ENCODE measurements at regions of chr9 and their contacts with region 1.

Region 1: DNA sequence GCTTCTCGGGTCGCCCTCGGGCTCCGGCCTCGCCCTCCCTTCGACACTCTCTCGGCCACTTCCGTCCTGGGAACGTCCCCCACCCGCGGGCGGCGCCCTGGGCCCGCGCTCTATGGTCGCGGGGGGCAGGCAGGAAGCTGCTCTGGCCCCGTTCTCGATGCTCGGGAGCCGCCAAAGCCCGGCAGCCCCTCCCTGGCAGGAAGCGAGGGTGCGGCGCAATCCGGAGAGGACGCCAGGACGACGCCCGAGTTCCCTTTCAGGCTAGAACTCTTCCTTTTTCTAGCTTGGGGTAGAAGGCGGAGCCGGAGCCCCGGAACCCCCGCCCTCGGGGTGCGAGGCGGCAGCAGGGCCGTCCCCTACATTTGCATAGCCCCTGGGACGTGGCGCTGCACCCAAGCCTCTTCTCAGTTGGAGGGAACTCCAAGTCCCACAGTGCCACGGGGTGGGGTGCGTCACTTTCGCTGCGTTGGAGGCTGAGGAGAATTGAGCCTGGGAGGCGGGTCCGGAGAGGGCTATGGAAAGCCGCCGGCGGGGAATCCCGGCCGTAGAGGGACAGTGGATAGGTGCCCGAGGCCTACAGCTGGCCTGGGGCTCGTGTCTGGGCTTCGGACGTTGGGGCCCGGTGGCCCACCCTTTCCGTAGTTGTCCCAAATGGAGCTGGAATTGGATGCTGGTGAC is at the starts of genes CREB3 and TLN1:
- DNase-seq: peak; percentile 99
- H3K4me3 ChIP-seq: peak within 1 kb of the TSS; percentile 72 to 88 (median 80)
- H3K27ac ChIP-seq: peak within 1 kb of the TSS; percentile 74
- H3K4me1 ChIP-seq: peaks cover 52% of the 10 kb centered on the region
- H3K27me3 ChIP-seq: no peaks in the 10 kb centered on the region
- CTCF ChIP-seq: no peak
- total RNA-seq, gene CREB3: 45.4 to 60.8 TPM
- total RNA-seq, gene TLN1: 202 to 213 TPM

Region 2: DNA sequence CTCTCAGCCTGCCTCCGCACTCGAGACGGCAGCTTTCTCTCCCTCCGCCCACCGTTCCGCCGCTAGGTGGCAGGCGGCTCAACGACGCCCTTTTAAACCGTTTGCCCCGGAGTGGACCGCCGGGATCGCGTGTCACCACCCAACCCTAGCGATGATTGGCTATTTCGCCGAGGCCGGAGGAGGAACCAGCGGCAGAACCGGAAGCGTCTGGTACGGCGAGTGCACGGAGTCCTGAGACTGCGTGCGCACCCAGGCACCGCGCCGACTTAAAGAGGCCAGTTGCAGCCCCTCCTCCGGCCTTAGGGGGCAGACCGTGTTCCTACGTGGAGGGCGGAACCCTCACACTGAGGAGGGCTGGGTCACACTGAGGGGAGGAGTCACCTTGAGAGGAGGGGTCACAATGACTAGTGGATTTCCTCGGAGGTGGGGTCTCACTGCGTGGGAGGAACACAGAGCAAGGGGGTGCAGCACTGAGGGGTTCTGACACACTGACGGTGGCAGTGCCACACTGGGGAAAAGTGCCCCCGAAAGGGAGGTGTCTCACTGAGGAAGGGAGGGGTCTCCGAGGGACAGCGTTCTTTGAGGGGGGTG is 128.2 kb before region 1 on chr9:
- CTCF ChIA-PET with region 1: no interaction called
- dilution Hi-C with region 1: no loop called
- in situ Hi-C with region 1: no loop called
- intact Hi-C with region 1: loop called (anchors 1 kb)
- DNase-seq: peak; percentile 99
- H3K4me3 ChIP-seq: peak overlapping the region; percentile 60 to 67 (median 64)
- H3K27ac ChIP-seq: peak overlapping the region; percentile 68
- H3K4me1 ChIP-seq: peaks cover 28% of the 10 kb centered on the region
- H3K27me3 ChIP-seq: no peaks in the 10 kb centered on the region
- CTCF ChIP-seq: peak; percentile 82 to 83

Region 3: GRCh38 chr9:35657546-35658136 is 74.6 kb before region 1 on chr9 and contains the start of gene RMRP:
- CTCF ChIA-PET with region 1: no interaction called
- dilution Hi-C with region 1: no loop called
- in situ Hi-C with region 1: loop called in 1 of 2 experiments (anchors 5 kb)
- intact Hi-C with region 1: loop called (anchors 1 kb)
- DNase-seq: peak; percentile 99
- H3K4me3 ChIP-seq: peak within 1 kb of the TSS; percentile 88 to 95 (median 94)
- H3K27ac ChIP-seq: peak within 1 kb of the TSS; percentile 100
- H3K4me1 ChIP-seq: peaks cover 26% of the 10 kb centered on the region
- H3K27me3 ChIP-seq: no peaks in the 10 kb centered on the region
- CTCF ChIP-seq: peak; percentile 2 to 25
- total RNA-seq, gene RMRP: 16,267 to 114,057 TPM

Region 4: GRCh38 chr9:35696525-35697215 is 35.6 kb before region 1 on chr9:
- CTCF ChIA-PET with region 1: interaction called, 13 read pairs
- dilution Hi-C with region 1: no loop called
- in situ Hi-C with region 1: no loop called
- intact Hi-C with region 1: loop called (anchors 2 kb)
- DNase-seq: peak; percentile 42
- H3K4me3 ChIP-seq: no peak overlapping the region
- H3K27ac ChIP-seq: no peak overlapping the region
- H3K4me1 ChIP-seq: no peaks in the 10 kb centered on the region
- H3K27me3 ChIP-seq: no peaks in the 10 kb centered on the region
- CTCF ChIP-seq: peak; percentile 89 to 94

Region 5: GRCh38 chr9:35748858-35749514 is 16.7 kb after region 1 on chr9 and contains the starts of genes GBA2 and RGP1:
- CTCF ChIA-PET with region 1: interaction called, 4 read pairs
- dilution Hi-C with region 1: no loop called
- in situ Hi-C with region 1: no loop called
- intact Hi-C with region 1: loop called (anchors 1 kb)
- DNase-seq: peak; percentile 79
- H3K4me3 ChIP-seq: peak within 1 kb of the TSS; percentile 66 to 83 (median 71)
- H3K27ac ChIP-seq: peak within 1 kb of the TSS; percentile 50
- H3K4me1 ChIP-seq: peaks cover 24% of the 10 kb centered on the region
- H3K27me3 ChIP-seq: no peaks in the 10 kb centered on the region
- CTCF ChIP-seq: no peak
- total RNA-seq, gene GBA2: 41.0 to 49.8 TPM
- total RNA-seq, gene RGP1: 20.5 to 42.3 TPM

Region 6: GRCh38 chr9:35771534-35771933 is 39.3 kb after region 1 on chr9:
- CTCF ChIA-PET with region 1: no interaction called
- dilution Hi-C with region 1: no loop called
- in situ Hi-C with region 1: no loop called
- intact Hi-C with region 1: loop called (anchors 1 kb)
- DNase-seq: peak; percentile 17
- H3K4me3 ChIP-seq: no peak overlapping the region
- H3K27ac ChIP-seq: no peak overlapping the region
- H3K4me1 ChIP-seq: peaks cover 14% of the 10 kb centered on the region
- H3K27me3 ChIP-seq: no peaks in the 10 kb centered on the region
- CTCF ChIP-seq: no peak

Region 7: DNA sequence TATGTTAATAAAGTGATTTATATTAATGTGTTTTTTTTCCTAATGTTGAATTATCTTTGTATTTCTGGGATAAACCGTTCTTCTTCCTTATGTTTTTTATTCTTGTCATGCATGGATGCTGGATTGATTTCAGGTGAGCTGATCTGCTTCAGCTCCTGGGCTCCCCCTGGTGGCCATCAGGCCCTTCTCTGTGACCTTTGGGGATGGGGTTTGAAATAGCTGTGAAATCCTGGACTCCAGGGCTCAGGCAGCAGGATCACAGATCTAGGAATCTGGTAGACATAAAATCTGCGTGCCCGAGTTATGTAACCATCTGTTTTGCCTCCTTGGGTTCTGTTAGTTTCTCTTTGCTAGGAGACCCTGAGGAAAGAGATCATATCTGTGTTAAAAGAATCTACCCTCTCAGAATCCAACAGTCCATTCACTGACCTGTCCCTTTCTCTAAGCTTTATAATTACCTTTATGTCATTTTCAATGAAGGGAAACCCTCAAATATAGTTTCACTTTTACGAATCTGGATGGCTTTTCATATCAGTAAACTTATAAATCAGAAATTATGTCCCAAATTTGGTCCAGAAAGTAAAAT is 150.1 kb after region 1 on chr9:
- CTCF ChIA-PET with region 1: interaction called, 6 read pairs
- dilution Hi-C with region 1: no loop called
- in situ Hi-C with region 1: no loop called
- intact Hi-C with region 1: loop called (anchors 2 kb)
- DNase-seq: peak; percentile 46
- H3K4me3 ChIP-seq: no peak overlapping the region
- H3K27ac ChIP-seq: no peak overlapping the region
- H3K4me1 ChIP-seq: no peaks in the 10 kb centered on the region
- H3K27me3 ChIP-seq: no peaks in the 10 kb centered on the region
- CTCF ChIP-seq: peak; percentile 99

Measured in mammary epithelial cell (primary cell).